Sigmoid colon (tissue), 7 donors: ENCODE measurements at regions of chr9 and their contacts with region 1.

Region 1: DNA sequence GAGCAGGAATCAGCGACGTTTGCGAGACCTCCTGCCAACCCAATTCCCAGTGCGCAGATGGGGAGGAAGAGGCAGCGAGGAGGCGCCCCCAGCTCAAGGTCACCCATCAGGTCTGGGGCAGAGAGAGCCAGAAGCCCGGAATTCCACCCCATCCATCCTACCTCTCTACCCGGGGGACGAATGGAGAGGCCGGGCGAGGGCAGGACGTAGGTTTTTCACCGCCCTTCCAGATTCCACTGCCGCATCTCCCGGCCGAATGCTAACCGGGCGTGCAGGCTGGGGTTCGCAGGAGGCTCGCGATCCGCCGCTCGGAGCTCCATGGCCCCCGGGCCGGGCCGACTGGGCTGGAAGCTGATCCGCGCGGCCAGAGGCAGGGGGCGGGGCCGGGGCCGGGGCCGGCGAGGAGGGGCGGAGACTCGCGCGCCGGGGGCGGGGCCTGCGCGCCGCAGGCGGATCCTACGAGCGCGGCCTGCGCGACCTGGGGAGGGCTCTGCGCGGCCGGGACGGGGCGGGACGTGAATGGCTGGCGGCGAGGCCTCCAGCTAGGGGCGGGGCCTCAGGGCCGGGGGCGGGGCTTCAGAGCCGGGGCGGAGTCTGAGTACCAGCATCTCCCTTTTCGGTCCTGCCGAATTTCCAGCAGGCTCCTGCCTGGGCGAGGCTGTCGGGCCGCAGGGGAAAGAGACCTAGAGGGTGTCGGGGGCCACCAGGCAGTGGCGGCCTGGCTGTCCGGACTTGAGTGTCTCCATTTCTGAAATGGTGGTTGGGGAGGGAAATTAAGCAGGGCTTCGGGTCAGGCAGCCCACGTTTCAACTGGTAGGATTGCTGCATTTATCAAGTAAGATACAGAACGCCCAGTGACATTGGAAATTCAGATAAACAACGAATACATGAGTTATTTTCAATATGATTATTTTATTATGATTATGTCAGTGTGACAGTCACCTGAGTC is at the start of gene ST6GALNAC4:
- DNase-seq: peak; percentile 97
- H3K4me3 ChIP-seq: peak within 1 kb of the TSS; percentile 51 to 68 (median 66)
- H3K27ac ChIP-seq: peak within 1 kb of the TSS; percentile 72 to 81 (median 78)
- H3K4me1 ChIP-seq: peaks cover 0 to 55% (median 50%) of the 10 kb centered on the region in 4 donors
- H3K27me3 ChIP-seq: no peaks in the 10 kb centered on the region
- CTCF ChIP-seq: no peak
- EP300 ChIP-seq: no peak
- POLR2A ChIP-seq: peak in 1 of 2 donors; percentile 39
- total RNA-seq, gene ST6GALNAC4: 22.8 to 27.7 (median 25.5) TPM

Region 2: DNA sequence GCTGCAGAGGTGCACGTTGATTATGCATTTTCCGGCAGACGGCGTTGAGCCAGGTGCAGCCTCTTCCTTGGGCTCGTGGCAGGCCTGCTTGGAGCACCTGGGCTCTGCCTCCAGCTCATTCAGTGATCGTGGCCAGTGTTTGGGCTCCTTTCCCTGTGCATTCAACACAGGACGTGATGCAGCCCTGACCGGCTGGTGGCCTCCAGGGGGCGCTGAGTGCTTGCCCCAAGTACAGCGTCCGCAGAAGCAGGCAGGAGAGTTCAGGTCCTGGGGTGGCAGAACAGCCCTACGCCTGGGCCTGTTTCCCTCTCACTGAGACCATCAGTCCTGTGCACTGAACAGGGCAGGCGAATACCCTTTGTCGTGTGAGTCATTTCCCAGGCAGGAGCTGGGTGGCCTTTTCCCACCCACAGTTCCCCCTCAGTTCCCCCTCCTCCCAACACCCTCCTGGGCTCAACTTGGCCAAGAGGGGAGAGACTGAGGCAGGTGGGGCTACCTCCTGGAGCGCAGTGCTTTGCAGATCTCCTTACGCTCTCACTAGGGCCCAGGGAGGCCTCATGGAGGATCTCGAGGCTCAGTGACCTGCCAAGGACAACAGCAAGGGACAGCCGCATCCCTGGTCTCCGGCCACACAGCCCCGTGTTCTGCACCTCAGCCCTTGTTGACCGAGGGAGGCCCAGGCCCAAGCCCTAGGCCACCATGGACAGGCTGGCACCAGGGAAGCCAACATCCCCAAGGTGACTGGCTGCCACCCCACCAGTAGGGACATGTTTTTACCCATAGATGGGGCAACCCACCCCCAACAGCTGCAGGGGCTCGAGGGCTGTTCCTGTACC is 412.8 kb before region 1 on chr9:
- intact Hi-C with region 1: loop called (anchors 10 kb)
- DNase-seq: peak; percentile 94
- H3K4me3 ChIP-seq: no peak overlapping the region
- H3K27ac ChIP-seq: peak overlapping the region in 3 of 4 donors; percentile 74 to 75 (median 75)
- H3K4me1 ChIP-seq: peaks cover 0 to 23% (median 14%) of the 10 kb centered on the region in 4 donors
- H3K27me3 ChIP-seq: no peaks in the 10 kb centered on the region
- CTCF ChIP-seq: peak; percentile 86 to 96 (median 88)
- EP300 ChIP-seq: no peak
- POLR2A ChIP-seq: no peak

Region 3: GRCh38 chr9:127734747-127735529 is 182.0 kb before region 1 on chr9 and contains the start of gene TOR2A:
- intact Hi-C with region 1: loop called (anchors 2 kb)
- DNase-seq: peak; percentile 99
- H3K4me3 ChIP-seq: peak within 1 kb of the TSS; percentile 50 to 93 (median 76)
- H3K27ac ChIP-seq: peak within 1 kb of the TSS; percentile 91 to 98 (median 98)
- H3K4me1 ChIP-seq: peaks cover 0 to 27% (median 16%) of the 10 kb centered on the region in 4 donors
- H3K27me3 ChIP-seq: no peaks in the 10 kb centered on the region
- CTCF ChIP-seq: peak; percentile 89 to 99 (median 98)
- EP300 ChIP-seq: no peak
- POLR2A ChIP-seq: peak in 1 of 2 donors; percentile 46
- total RNA-seq, gene TOR2A: 6.1 to 10.4 (median 7.9) TPM

Region 4: DNA sequence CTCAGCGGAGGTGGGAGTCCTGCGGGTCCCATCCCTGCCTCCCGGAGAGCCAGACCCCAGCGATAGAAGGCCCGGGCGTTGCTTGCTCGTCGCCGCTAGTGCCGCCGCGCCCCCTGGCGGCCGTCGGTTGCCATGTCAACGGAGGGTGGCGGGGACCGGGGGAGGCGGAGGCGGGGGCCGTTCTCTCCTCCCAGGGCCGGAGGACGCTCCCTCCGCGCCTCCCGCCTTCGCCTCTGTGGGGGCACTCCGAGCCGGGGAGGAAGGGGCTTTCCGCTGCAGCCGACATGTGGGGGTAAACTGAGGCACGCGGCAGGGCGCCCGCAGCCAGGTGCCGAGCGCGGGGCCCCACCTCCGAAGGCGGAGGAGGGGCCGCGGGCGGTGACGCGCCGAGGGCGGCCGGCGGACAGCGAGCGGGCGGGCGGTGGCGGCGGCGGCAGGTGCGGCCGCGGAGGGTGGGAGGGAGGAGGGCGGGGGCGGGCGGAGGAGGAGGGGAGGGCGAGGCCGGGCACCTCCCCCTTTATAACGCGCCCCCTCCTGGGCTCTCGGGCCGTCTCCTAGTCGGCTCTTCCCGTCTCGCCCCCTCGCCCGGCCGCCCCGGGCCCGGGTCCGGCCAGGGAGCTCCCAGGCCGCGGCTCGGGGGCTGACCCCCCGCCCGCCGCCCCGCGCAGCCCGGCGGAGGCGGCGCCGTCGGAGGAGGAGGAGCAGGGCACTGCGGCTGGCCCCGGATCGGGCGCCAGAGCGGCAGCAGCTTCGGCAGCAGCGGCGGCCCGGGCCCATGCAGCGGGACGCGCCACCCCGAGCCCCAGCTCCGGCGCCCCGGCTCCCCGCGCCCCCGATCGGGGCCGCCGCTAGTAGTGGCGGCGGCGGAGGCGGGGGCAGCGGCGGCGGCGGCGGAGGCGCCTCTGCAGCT is 131.7 kb before region 1 on chr9:
- intact Hi-C with region 1: loop called (anchors 5 kb)
- DNase-seq: peak; percentile 95
- H3K4me3 ChIP-seq: peak overlapping the region; percentile 63 to 100 (median 96)
- H3K27ac ChIP-seq: peak overlapping the region; percentile 96 to 99 (median 96)
- H3K4me1 ChIP-seq: peaks cover 0 to 36% (median 29%) of the 10 kb centered on the region in 4 donors
- H3K27me3 ChIP-seq: no peaks in the 10 kb centered on the region
- CTCF ChIP-seq: peak; percentile 94 to 98 (median 97)
- EP300 ChIP-seq: no peak
- POLR2A ChIP-seq: no peak

Region 5: DNA sequence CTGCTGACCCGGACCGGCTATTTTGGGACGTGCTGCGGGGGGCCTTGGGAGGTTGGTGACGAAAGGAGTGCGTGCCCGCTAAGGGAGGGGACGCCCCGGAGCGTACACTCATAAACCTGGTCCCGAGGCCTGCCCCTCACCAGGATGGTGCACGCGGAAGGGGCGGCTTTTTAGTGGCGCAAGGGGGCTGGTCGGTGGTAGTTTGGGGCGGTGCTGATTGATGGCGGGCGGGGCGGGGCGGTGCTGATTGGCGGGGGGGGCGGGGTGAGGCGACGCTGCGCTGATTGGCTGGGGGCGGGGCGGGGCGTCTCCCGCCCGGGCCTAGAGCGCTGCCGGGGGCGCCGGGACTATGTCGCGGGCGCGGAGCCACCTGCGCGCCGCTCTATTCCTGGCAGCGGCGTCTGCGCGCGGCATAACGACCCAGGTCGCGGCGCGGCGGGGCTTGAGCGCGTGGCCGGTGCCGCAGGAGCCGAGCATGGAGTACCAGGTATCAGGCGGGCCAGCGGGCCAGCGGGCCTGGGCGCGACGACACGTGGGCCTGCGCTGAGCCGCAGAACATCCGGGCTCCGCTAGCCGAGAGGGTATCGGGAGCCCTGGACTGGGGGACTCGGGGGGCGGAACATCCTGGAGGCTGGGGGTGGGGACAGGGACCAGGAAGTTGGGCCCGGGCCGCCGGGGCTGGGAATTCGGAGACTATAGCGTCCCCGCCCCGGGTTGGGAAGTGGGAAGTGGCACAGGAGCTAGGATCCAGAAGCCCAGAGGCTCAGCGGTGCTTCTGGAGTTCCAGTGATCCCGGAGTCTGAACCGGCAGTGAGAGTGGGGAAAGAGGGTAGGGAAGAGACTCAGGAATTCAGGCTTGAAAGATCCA is 114.1 kb before region 1 on chr9 and contains the start of gene FPGS:
- intact Hi-C with region 1: loop called (anchors 5 kb)
- DNase-seq: peak; percentile 96
- H3K4me3 ChIP-seq: peak within 1 kb of the TSS; percentile 50 to 81 (median 70)
- H3K27ac ChIP-seq: peak within 1 kb of the TSS; percentile 88 to 95 (median 92)
- H3K4me1 ChIP-seq: peaks cover 0 to 27% (median 24%) of the 10 kb centered on the region in 4 donors
- H3K27me3 ChIP-seq: no peaks in the 10 kb centered on the region
- CTCF ChIP-seq: no peak
- EP300 ChIP-seq: no peak
- POLR2A ChIP-seq: peak; percentile 48 to 50
- total RNA-seq, gene FPGS: 32.1 to 47.9 (median 35.8) TPM

Region 6: GRCh38 chr9:127877566-127877998 is 39.4 kb before region 1 on chr9 and contains the start of gene AK1:
- intact Hi-C with region 1: loop called (anchors 5 kb)
- DNase-seq: peak; percentile 91
- H3K4me3 ChIP-seq: peak within 1 kb of the TSS; percentile 45 to 74 (median 62)
- H3K27ac ChIP-seq: peak within 1 kb of the TSS; percentile 82 to 87 (median 84)
- H3K4me1 ChIP-seq: peaks cover 0 to 56% (median 52%) of the 10 kb centered on the region in 4 donors
- H3K27me3 ChIP-seq: no peaks in the 10 kb centered on the region
- CTCF ChIP-seq: no peak
- EP300 ChIP-seq: no peak
- POLR2A ChIP-seq: peak in 1 of 2 donors; percentile 53
- total RNA-seq, gene AK1: 28.8 to 73.2 (median 48.7) TPM

Region 7: DNA sequence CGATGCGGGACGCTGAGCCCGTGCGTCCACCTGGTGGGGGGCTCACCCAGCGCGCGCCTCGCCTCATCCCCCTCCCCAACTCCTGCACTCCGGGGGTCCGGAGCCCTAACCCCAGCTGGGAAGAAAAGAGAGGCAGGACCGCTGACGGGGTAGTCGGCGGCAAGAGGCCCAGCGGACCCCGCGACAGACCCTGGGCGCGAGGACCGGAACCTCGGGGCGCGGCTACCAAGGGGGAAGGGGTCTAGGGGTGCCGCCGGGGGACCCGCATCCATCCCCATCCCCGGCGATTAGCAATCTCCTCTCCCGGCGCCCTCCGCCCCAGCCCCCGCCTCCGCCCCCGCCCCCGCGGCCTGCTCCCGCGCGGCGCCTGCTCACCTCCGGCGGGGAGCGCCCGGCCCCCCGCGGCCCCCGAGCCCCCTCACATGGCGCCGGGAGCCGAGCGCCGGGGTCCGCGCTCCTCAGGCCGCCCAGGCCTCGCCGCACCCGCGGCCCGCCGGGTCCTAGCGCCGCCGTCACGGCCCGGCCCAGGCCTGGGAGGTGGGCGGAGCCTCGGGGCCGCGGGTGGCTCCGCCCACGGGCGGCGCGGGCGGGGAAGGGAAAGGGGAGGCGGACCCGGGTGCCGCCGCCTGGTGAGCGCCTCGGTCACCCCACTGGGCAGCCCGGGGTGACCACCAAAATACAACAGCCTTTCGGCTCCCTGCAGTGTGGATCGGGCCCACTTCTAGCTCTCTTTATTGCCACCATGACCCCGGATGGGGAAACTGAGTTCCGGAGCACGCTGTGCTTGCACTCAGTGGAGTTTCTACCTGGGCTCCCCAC is 17.6 kb before region 1 on chr9 and contains the start of gene ST6GALNAC6:
- intact Hi-C with region 1: loop called (anchors 2 kb)
- DNase-seq: peak; percentile 85
- H3K4me3 ChIP-seq: peak within 1 kb of the TSS; percentile 94 to 100 (median 94)
- H3K27ac ChIP-seq: peak within 1 kb of the TSS; percentile 94 to 98 (median 97)
- H3K4me1 ChIP-seq: peaks cover 0 to 59% (median 52%) of the 10 kb centered on the region in 4 donors
- H3K27me3 ChIP-seq: no peaks in the 10 kb centered on the region
- CTCF ChIP-seq: no peak
- EP300 ChIP-seq: no peak
- POLR2A ChIP-seq: peak in 1 of 2 donors; percentile 29
- total RNA-seq, gene ST6GALNAC6: 107 to 125 (median 114) TPM

Region 8: DNA sequence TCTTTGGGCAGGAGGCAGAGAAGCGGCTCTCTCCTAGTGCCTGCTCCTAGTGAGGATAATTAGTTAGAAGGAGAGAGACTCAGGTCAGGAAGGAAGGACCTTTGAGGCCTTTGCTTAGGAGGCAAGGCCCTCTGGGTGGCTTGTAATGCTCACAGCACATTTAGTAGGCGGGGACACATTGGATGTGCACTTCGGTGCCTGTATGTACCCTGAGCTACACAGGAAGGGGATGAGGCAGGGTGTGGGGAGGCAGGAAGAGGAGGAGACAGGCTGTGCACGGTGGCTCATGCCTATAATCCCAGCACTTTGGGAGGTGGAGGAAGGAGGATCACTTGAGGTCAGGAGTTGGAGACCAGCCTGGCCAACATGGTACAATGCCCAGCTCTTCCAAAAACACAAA is 225.1 kb after region 1 on chr9:
- intact Hi-C with region 1: no loop called
- DNase-seq: no peak
- H3K4me3 ChIP-seq: no peak overlapping the region
- H3K27ac ChIP-seq: no peak overlapping the region
- H3K4me1 ChIP-seq: no peaks in the 10 kb centered on the region
- H3K27me3 ChIP-seq: no peaks in the 10 kb centered on the region
- CTCF ChIP-seq: no peak
- EP300 ChIP-seq: no peak
- POLR2A ChIP-seq: no peak

Region 9: GRCh38 chr9:128947422-128948301 is 1030.7 kb after region 1 on chr9 and contains the starts of genes DOLK and NUP188:
- intact Hi-C with region 1: no loop called
- DNase-seq: peak; percentile 97
- H3K4me3 ChIP-seq: peak within 1 kb of the TSS; percentile 59 to 89 (median 76)
- H3K27ac ChIP-seq: peak within 1 kb of the TSS; percentile 86 to 95 (median 94)
- H3K4me1 ChIP-seq: peaks cover 0 to 17% (median 16%) of the 10 kb centered on the region in 4 donors
- H3K27me3 ChIP-seq: no peaks in the 10 kb centered on the region
- CTCF ChIP-seq: no peak
- EP300 ChIP-seq: no peak
- POLR2A ChIP-seq: peak; percentile 87
- total RNA-seq, gene DOLK: 6.2 to 11.4 (median 9.3) TPM
- total RNA-seq, gene NUP188: 16.6 to 28.8 (median 24.6) TPM